ENCODE measurements at regions of chr4 and their contacts with region 1.

Region 1: DNA sequence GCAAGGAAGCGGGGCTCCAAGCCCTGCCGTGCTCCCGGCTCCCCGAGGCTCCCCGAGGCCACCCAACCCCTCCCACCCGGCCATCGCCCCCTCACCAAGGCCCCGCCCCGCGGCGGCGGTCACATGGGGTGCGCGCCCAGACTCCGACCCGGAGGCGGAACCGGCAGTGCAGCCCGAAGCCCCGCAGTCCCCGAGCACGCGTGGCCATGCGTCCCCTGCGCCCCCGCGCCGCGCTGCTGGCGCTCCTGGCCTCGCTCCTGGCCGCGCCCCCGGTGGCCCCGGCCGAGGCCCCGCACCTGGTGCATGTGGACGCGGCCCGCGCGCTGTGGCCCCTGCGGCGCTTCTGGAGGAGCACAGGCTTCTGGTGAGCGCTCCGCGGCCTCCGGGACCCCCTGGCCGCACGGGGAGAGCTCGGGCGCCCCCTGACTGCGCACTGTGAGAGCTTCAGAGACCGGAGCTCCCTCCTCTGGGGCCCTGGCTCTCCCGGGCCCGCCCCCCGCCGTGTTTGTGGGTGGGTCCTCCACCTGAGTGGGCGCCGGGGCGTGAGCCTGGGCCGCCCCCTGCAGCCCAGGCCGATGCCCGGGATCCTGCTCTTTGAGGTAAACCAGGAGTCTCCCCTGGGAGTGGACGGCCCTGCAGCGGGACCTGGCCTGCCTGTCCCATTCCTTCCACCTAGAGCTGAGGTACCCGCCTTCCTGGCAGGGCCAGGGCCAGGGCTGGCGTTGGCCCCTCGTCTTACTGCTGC is at the start of gene IDUA:
- DNase-seq: peak; percentile 83 to 90 (median 85)
- ATAC-seq: peak; percentile 55 to 90 (median 86)
- H3K4me3 ChIP-seq: peak within 1 kb of the TSS; percentile 60 to 93 (median 73)
- H3K27ac ChIP-seq: peak within 1 kb of the TSS in 10 of 12 donors; percentile 33 to 76 (median 55)
- H3K4me1 ChIP-seq: peaks cover 0 to 34% (median 18%) of the 10 kb centered on the region in 12 donors
- H3K27me3 ChIP-seq: no peaks in the 10 kb centered on the region
- CTCF ChIP-seq: peak; percentile 15 to 59 (median 43)
- POLR2A ChIP-seq: peak in 1 of 2 donors; percentile 34
- total RNA-seq, gene IDUA: 5.0 to 17.4 (median 6.9) TPM

Region 2: GRCh38 chr4:742742-743311 is 244.2 kb before region 1 on chr4:
- intact Hi-C with region 1: loop called in 5 of 10 experiments (anchors 5 to 10 kb)
- DNase-seq: peak; percentile 57 to 83 (median 64)
- ATAC-seq: peak; percentile 22 to 89 (median 86)
- H3K4me3 ChIP-seq: no peak overlapping the region
- H3K27ac ChIP-seq: no peak overlapping the region
- H3K4me1 ChIP-seq: no peaks in the 10 kb centered on the region
- H3K27me3 ChIP-seq: no peaks in the 10 kb centered on the region
- CTCF ChIP-seq: peak; percentile 80 to 95 (median 90)
- POLR2A ChIP-seq: no peak

Region 3: GRCh38 chr4:781493-782216 is 205.4 kb before region 1 on chr4:
- intact Hi-C with region 1: loop called in 1 of 10 experiments (anchors 10 kb)
- DNase-seq: peak; percentile 99 to 100 (median 99)
- ATAC-seq: peak; percentile 97 to 98 (median 98)
- H3K4me3 ChIP-seq: peak overlapping the region; percentile 74 to 100 (median 96)
- H3K27ac ChIP-seq: peak overlapping the region; percentile 87 to 98 (median 94)
- H3K4me1 ChIP-seq: peaks cover 3 to 66% (median 37%) of the 10 kb centered on the region in 12 donors
- H3K27me3 ChIP-seq: peaks cover 11 to 25% (median 18%) of the 10 kb centered on the region in 9 donors
- CTCF ChIP-seq: no peak
- POLR2A ChIP-seq: peak; percentile 93 to 98

Region 4: GRCh38 chr4:1043658-1044468 is 56.8 kb after region 1 on chr4:
- intact Hi-C with region 1: no loop called
- DNase-seq: peak; percentile 73 to 94 (median 89)
- ATAC-seq: peak; percentile 52 to 87 (median 86)
- H3K4me3 ChIP-seq: peak overlapping the region in 5 of 12 donors; percentile 18 to 27 (median 22)
- H3K27ac ChIP-seq: peak overlapping the region in 6 of 12 donors; percentile 20 to 59 (median 38)
- H3K4me1 ChIP-seq: peaks cover 0 to 37% (median 21%) of the 10 kb centered on the region in 12 donors
- H3K27me3 ChIP-seq: peaks cover 7 to 44% (median 22%) of the 10 kb centered on the region in 9 donors
- CTCF ChIP-seq: no peak
- POLR2A ChIP-seq: no peak

Region 5: GRCh38 chr4:1055721-1056590 is 68.9 kb after region 1 on chr4:
- intact Hi-C with region 1: no loop called
- DNase-seq: peak in 1 of 5 donors; percentile 77
- ATAC-seq: peak in 3 of 4 donors; percentile 32 to 55 (median 40)
- H3K4me3 ChIP-seq: peak overlapping the region in 6 of 12 donors; percentile 22 to 50 (median 40)
- H3K27ac ChIP-seq: peak overlapping the region in 1 of 12 donors; percentile 27
- H3K4me1 ChIP-seq: peaks cover 0 to 31% (median 6%) of the 10 kb centered on the region in 12 donors
- H3K27me3 ChIP-seq: peaks cover 0 to 74% (median 21%) of the 10 kb centered on the region in 9 donors
- CTCF ChIP-seq: no peak
- POLR2A ChIP-seq: no peak

Measured in heart left ventricle (tissue), 16 donors.